ENCODE measurements at regions of chrX and their contacts with region 1.

Region 1: GRCh38 chrX:41441934-41442823 is 5.0 kb upstream of the NYX start:
- DNase-seq: peak; percentile 86
- H3K4me3 Mint-ChIP-seq: peak overlapping the region; percentile 62
- H3K27ac Mint-ChIP-seq: peak overlapping the region; percentile 69
- H3K4me1 Mint-ChIP-seq: peaks cover 10% of the 10 kb centered on the region
- H3K27me3 Mint-ChIP-seq: no peaks in the 10 kb centered on the region

Region 2: DNA sequence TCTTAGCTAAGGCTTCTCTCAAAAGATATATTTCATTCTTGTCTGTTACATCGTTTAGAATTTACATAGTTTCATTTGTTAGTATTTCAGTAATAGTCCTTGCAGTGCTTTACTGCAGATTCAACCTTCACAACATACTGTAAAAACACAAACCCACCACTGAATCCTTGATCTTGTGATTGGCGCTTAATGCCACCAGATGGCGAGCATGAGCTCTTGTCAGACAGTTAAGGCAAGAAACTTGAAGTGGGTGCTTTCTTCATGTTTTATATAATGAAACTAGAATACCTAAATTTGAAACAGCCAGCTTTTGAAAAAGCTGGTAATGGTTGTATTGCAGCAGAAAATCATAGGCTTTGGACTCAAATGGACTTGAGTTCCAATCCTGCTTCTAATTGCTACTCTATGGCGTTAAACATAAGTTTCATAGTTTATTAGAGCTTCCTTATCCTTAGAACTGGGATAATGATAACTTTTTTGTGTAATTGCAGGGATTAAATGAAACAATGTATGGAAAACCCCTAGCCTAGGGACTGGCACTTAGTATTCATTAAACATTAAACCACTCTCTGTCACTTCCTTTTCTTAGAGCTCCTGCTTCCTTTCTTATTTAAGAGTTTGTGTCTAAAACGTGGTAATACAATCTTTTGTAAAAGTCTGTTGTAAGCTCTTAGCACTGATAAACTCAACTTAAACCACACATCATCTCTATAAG is 261.8 kb before region 1 on chrX:
- CTCF ChIA-PET with region 1: interaction called, 4 read pairs
- intact Hi-C with region 1: loop called (anchors 1 kb)
- DNase-seq: peak; percentile 67
- H3K4me3 Mint-ChIP-seq: peak overlapping the region; percentile 41
- H3K27ac Mint-ChIP-seq: peak overlapping the region; percentile 90
- H3K4me1 Mint-ChIP-seq: peaks cover 45% of the 10 kb centered on the region
- H3K27me3 Mint-ChIP-seq: no peaks in the 10 kb centered on the region

Region 3: GRCh38 chrX:41275661-41276609 is 166.2 kb before region 1 on chrX:
- CTCF ChIA-PET with region 1: interaction called, 3 read pairs
- intact Hi-C with region 1: loop called (anchors 1 kb)
- DNase-seq: peak; percentile 73
- H3K4me3 Mint-ChIP-seq: peak overlapping the region; percentile 74
- H3K27ac Mint-ChIP-seq: peak overlapping the region; percentile 41
- H3K4me1 Mint-ChIP-seq: peaks cover 7% of the 10 kb centered on the region
- H3K27me3 Mint-ChIP-seq: no peaks in the 10 kb centered on the region

Region 4: DNA sequence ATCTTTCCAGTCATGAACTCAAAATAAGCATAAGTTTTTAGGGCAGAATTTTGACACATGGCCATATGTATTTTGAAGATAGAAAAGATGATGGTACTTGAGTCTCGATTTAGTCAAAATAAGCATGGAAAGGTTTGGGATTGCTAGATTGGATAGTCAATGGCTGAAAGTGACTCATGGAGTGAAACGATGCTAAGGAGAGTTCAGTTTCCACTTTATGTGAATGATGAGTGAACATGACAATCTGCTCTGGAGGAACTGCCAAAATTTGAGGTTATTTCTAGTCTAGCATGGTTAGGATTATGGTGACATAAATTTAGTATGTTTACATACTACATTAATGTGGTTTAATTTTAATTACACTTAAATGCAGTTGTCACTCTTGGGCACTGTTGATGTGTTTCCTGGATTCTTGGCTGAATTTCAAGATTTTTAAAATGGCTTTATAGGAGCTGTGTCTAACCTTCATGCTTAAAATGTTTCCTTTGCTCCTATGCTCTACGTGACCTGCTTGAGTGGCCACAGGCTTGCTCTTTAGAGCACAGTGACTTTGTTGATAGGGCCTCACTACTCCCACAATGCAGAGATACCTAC is 91.1 kb before region 1 on chrX:
- CTCF ChIA-PET with region 1: no interaction called
- intact Hi-C with region 1: loop called (anchors 1 kb)
- DNase-seq: no peak
- H3K4me3 Mint-ChIP-seq: no peak overlapping the region
- H3K27ac Mint-ChIP-seq: peak overlapping the region; percentile 70
- H3K4me1 Mint-ChIP-seq: peaks cover 43% of the 10 kb centered on the region
- H3K27me3 Mint-ChIP-seq: no peaks in the 10 kb centered on the region

Region 5: GRCh38 chrX:41382714-41383645 is 59.2 kb before region 1 on chrX:
- CTCF ChIA-PET with region 1: interaction called, 4 read pairs
- intact Hi-C with region 1: loop called (anchors 1 kb)
- DNase-seq: peak; percentile 52
- H3K4me3 Mint-ChIP-seq: peak overlapping the region; percentile 70
- H3K27ac Mint-ChIP-seq: peak overlapping the region; percentile 96
- H3K4me1 Mint-ChIP-seq: peaks cover 26% of the 10 kb centered on the region
- H3K27me3 Mint-ChIP-seq: no peaks in the 10 kb centered on the region

Region 6: GRCh38 chrX:41491267-41492004 is 49.3 kb after region 1 on chrX:
- CTCF ChIA-PET with region 1: no interaction called
- intact Hi-C with region 1: no loop called
- DNase-seq: no peak
- H3K4me3 Mint-ChIP-seq: no peak overlapping the region
- H3K27ac Mint-ChIP-seq: no peak overlapping the region
- H3K4me1 Mint-ChIP-seq: no peaks in the 10 kb centered on the region
- H3K27me3 Mint-ChIP-seq: no peaks in the 10 kb centered on the region

Region 7: GRCh38 chrX:41518841-41519220 is 76.7 kb after region 1 on chrX:
- CTCF ChIA-PET with region 1: no interaction called
- intact Hi-C with region 1: no loop called
- DNase-seq: no peak
- H3K4me3 Mint-ChIP-seq: no peak overlapping the region
- H3K27ac Mint-ChIP-seq: no peak overlapping the region
- H3K4me1 Mint-ChIP-seq: peaks cover 14% of the 10 kb centered on the region
- H3K27me3 Mint-ChIP-seq: no peaks in the 10 kb centered on the region